Left lung (tissue), 14 donors: ENCODE measurements at regions of chr1 and their contacts with region 1.

Region 1: DNA sequence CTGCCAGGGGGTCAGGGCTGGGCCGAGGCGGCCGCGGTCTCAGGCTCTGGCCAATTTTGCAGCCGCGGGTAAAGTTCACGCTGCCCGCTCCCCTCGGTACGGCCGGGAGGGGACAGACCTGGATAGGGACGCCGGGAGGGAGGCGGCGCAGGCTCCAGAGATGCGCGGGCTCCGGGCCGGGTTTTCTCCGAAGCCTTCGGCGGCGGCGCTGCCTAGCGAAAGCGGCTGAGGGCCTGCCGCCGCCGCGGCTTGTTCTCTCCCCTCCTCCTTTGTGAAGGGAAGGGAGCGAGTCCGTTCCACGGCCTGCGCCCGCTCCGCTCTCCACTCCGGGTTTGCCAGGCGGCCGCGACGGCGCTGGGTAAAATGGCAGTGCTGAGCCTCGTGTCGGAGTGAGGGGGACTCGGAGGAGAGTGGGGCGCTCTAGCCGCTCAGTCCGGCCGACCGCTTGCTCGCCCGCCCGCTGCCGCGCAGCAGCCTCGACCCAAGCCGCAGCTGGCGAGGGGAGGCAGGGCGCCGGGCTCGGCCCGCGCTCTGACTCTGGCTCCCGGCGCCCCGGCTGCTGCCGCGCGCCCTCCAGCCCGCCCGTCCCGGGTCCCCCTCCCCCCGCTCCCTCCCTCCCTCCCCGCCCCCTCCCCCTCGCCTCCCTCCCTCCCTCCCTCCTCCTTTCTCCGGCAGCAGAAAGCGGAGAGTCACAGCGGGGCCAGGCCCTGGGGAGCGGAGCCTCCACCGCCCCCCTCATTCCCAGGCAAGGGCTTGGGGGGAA is at the start of gene ARID1A:
- DNase-seq: peak; percentile 96 to 99 (median 98)
- ATAC-seq: peak; percentile 79
- H3K4me3 ChIP-seq: peak within 1 kb of the TSS; percentile 93 to 94
- H3K27ac ChIP-seq: peak within 1 kb of the TSS; percentile 94 to 95
- H3K4me1 ChIP-seq: peaks cover 42 to 64% of the 10 kb centered on the region in 2 donors
- H3K27me3 ChIP-seq: no peaks in the 10 kb centered on the region
- CTCF ChIP-seq: no peak
- polyA plus RNA-seq, gene ARID1A: 94.5 to 106 (median 100) TPM

Region 2: DNA sequence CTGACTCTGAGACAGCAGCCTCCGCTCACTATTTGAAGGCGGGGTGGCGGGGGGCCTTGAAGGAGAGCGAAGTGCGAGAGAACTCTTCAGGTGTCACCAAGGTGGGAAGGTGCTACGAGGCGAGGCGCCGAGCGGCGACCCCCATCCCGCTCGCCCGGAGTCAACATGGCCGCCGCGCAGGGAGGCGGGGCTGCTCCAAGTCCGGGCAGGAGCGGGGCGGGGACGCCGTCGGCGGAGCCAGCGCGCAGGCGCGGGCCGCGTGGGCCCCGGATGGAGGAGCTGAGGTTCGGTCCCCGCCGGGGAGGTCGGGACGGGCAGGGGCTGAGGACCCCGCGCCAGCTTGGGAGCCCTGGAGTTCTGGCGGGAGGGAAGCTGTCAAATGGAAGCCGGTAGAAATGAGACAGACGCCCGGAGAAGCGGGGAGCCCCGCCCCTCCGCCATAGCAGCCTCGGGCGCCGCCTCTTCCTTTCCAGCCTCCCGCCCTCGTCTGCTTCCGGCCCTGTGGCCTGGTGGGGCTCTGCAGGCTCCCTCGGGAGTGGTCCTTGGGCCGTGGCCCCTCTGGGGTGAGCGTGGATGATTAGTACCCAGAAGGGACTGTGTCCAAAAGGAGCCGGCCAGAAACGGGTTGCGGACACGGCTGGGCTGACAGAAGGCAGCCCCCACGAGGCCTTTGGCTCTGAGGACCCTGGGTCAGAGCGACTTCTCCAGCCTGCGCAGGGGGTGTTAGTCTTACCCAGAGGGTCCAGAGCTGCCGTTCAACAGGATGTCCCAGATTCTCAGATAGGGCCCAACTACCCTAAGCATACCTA is 92.4 kb after region 1 on chr1 and contains the start of gene PIGV:
- intact Hi-C with region 1: loop called in 1 of 2 experiments (anchors 10 kb)
- DNase-seq: peak; percentile 88 to 96 (median 94)
- ATAC-seq: peak; percentile 86
- H3K4me3 ChIP-seq: peak within 1 kb of the TSS; percentile 65 to 82
- H3K27ac ChIP-seq: peak within 1 kb of the TSS; percentile 99 to 100
- H3K4me1 ChIP-seq: peaks cover 32 to 62% of the 10 kb centered on the region in 2 donors
- H3K27me3 ChIP-seq: no peaks in the 10 kb centered on the region
- CTCF ChIP-seq: peak in 1 of 2 donors; percentile 56
- polyA plus RNA-seq, gene PIGV: 14.5 to 18.0 (median 16.0) TPM